ENCODE measurements at regions of chr11 and their contacts with region 1.

Region 1: GRCh38 chr11:69449320-69450063 is 32.0 kb upstream of the LINC01488 start:
- DNase-seq: peak; percentile 93

Region 2: GRCh38 chr11:69111624-69112542 is 337.6 kb before region 1 on chr11:
- intact Hi-C with region 1: loop called in 1 of 2 experiments (anchors 1 kb)
- DNase-seq: no peak

Region 3: GRCh38 chr11:69620683-69621290 is 171.3 kb after region 1 on chr11:
- intact Hi-C with region 1: loop called in 1 of 2 experiments (anchors 10 kb)
- DNase-seq: no peak